ENCODE measurements at regions of chr20 and their contacts with region 1.

Region 1: DNA sequence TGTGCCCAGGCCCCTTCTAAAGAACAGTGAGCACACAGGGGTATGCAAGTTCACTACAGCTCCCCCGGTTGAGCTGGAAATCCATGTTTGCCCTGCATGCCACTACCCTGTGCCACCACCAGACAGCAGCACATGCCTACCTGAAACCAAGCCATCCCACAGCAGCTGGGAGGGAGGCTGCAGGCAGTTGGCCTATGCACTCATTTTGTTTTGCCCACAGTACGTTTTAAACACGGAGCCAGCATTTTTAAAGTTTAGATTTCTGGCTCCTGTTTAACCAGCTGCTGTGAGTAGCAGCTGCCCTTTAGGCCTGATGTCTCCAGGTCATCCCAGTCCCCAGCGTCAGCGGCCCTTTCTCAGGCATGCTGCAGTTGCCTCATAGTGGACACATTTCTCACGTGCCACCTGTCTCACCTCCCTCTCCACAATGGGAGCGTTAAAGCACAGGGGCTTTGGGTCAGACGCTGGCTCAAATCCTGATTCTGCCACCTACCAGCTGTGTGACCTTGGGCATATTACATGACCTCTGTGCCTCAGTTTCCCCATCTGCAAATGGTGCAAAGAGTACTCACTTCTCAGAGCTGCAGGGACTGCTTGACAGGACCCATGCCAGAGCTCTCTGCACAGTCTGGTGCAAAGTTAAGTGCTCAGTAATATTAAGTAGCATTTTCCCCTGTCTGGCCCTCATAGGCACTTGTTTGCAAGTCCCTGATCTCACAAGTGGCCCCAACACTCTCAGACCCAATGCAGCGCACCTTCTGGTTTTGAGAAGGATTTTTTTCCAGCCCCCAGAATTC is 8.1 kb upstream of the UBE2V1 start:
- DNase-seq: no peak
- ATAC-seq: peak; percentile 70

Region 2: GRCh38 chr20:50048420-50049166 is 72.5 kb before region 1 on chr20:
- intact Hi-C with region 1: no loop called
- DNase-seq: no peak
- ATAC-seq: no peak

Region 3: DNA sequence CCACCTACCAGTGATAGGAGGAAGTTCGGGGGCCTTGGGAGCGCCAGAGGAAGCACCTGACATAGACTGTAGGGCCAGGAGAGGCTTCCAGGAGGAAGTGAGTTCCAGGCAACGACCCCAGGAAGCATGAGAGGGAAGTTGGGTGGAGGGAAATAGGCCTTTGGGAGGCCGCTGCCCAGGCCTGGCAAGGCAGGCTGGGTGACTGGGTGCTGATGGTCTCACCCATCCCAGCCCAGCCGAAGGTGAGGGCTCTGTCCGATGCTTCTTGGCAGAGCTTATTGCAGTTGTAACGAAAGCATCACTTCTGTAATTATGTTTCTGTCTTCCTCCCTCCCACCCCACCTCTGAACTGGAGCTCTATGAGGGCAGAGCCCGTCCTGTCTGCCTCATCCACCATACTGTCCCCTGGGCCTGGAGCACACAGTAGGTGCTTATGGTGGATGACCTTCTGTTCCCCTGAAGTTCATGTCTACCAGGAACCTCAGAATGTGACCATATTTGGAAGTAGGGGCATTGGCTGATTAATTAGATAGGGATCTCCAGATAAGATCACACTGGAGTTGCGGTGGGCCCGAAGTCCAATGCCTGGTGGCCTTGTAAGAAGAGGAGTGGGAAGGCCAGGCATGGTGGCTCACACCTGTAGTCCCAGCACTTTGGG is 62.2 kb before region 1 on chr20:
- intact Hi-C with region 1: no loop called
- DNase-seq: no peak
- ATAC-seq: no peak

Region 4: GRCh38 chr20:50169329-50169831 is 48.3 kb after region 1 on chr20:
- intact Hi-C with region 1: loop called (anchors 1 kb)
- DNase-seq: no peak
- ATAC-seq: no peak

Measured in Right ventricle myocardium inferior (tissue), 1 donor.